Mammary epithelial cell (primary cell): ENCODE measurements at regions of chr3 and their contacts with region 1.

Region 1: DNA sequence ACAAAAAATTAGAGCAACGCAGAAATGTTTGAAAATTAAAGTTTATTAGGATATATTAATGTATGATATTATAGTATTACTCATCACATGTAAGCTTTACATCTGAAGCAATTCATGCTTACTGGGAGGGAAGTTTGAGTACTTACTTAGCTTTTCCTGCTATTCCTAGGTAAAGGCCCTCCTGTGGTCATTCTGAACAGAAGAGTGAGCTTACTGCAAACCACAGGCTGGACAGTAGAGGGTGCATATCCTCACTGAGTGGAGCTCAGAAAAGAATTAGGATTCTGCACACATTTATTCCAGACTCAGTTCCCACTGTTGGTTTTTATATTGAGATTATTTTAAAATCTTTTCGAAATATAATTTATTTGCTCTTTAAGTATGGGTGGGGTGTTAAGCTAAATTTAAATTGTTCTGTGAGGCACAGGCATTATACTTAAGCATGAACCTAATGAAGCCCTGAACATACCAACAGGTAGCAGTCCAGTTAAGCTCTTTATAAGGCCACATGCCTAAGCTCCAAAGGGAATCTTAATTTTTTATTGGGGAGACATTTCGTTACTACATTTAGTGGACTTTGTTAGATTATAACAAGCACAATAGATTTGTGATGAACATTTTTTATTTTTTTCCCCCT is 10.2 kb downstream of the MRPS22 start:
- DNase-seq: peak; percentile 54
- H3K4me3 ChIP-seq: no peak overlapping the region
- H3K27ac ChIP-seq: no peak overlapping the region
- H3K4me1 ChIP-seq: no peaks in the 10 kb centered on the region
- H3K27me3 ChIP-seq: no peaks in the 10 kb centered on the region
- CTCF ChIP-seq: peak; percentile 60 to 69

Region 2: GRCh38 chr3:139269984-139270383 is 84.1 kb before region 1 on chr3:
- CTCF ChIA-PET with region 1: no interaction called
- dilution Hi-C with region 1: no loop called
- in situ Hi-C with region 1: no loop called
- intact Hi-C with region 1: no loop called
- DNase-seq: no peak
- H3K4me3 ChIP-seq: no peak overlapping the region
- H3K27ac ChIP-seq: no peak overlapping the region
- H3K4me1 ChIP-seq: no peaks in the 10 kb centered on the region
- H3K27me3 ChIP-seq: no peaks in the 10 kb centered on the region
- CTCF ChIP-seq: no peak

Region 3: GRCh38 chr3:139338405-139338804 is 15.6 kb before region 1 on chr3:
- CTCF ChIA-PET with region 1: interaction called, 11 read pairs
- dilution Hi-C with region 1: no loop called
- in situ Hi-C with region 1: no loop called
- intact Hi-C with region 1: no loop called
- DNase-seq: no peak
- H3K4me3 ChIP-seq: no peak overlapping the region
- H3K27ac ChIP-seq: no peak overlapping the region
- H3K4me1 ChIP-seq: peaks cover 8% of the 10 kb centered on the region
- H3K27me3 ChIP-seq: peaks cover 2% of the 10 kb centered on the region
- CTCF ChIP-seq: no peak